ENCODE measurements at regions of chr7 and their contacts with region 1.

Region 1: GRCh38 chr7:103524042-103524907 is 78.3 kb upstream of the SLC26A5 start:
- DNase-seq: no peak
- ATAC-seq: peak in 3 of 8 donors; percentile 33 to 74 (median 47)
- H3K4me3 ChIP-seq: peak overlapping the region in 1 of 10 donors; percentile 8
- H3K27ac ChIP-seq: no peak overlapping the region
- H3K4me1 ChIP-seq: no peaks in the 10 kb centered on the region
- H3K27me3 ChIP-seq: peaks cover 0 to 3% (median 0%) of the 10 kb centered on the region in 7 donors
- CTCF ChIP-seq: peak in 7 of 9 donors; percentile 23 to 61 (median 47)

Region 2: GRCh38 chr7:102942181-102942866 is 582.0 kb before region 1 on chr7:
- intact Hi-C with region 1: no loop called
- DNase-seq: no peak
- ATAC-seq: peak in 2 of 8 donors; percentile 4 to 53
- H3K4me3 ChIP-seq: no peak overlapping the region
- H3K27ac ChIP-seq: peak overlapping the region in 3 of 10 donors; percentile 2 to 32 (median 21)
- H3K4me1 ChIP-seq: peaks cover 3 to 46% (median 23%) of the 10 kb centered on the region in 9 donors
- H3K27me3 ChIP-seq: no peaks in the 10 kb centered on the region
- CTCF ChIP-seq: no peak

Region 3: GRCh38 chr7:103487433-103487832 is 36.8 kb before region 1 on chr7:
- intact Hi-C with region 1: no loop called
- DNase-seq: no peak
- ATAC-seq: no peak
- H3K4me3 ChIP-seq: no peak overlapping the region
- H3K27ac ChIP-seq: no peak overlapping the region
- H3K4me1 ChIP-seq: no peaks in the 10 kb centered on the region
- H3K27me3 ChIP-seq: peaks cover 0 to 10% (median 0%) of the 10 kb centered on the region in 7 donors
- CTCF ChIP-seq: no peak

Region 4: DNA sequence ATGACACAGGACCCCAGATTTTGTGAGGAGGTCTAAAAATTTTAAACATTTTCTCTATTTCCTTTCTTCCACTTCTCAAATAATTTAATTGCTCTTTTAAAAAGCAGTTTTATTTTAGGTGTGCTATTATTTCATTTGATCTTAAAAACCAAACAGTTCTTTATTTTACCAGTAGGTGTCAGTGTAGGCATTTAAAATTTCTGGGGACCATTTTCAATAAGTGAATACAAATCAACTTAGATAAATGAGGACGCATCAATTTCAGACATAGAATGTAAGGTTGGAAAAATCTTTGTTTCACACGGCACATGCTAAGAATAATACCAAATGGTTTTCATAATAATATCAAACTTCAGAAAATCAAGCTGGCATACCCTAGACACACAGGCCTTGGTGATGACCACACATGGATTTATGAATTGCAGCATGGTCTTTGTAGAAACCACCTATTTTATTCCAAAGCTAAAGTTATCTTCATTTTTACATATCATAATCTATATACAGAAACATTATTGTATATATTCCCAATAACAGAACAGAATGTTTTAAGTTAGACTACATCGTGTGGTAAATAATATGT is 49.3 kb after region 1 on chr7:
- intact Hi-C with region 1: loop called in 1 of 10 experiments (anchors 2 kb)
- DNase-seq: no peak
- ATAC-seq: no peak
- H3K4me3 ChIP-seq: no peak overlapping the region
- H3K27ac ChIP-seq: no peak overlapping the region
- H3K4me1 ChIP-seq: no peaks in the 10 kb centered on the region
- H3K27me3 ChIP-seq: no peaks in the 10 kb centered on the region
- CTCF ChIP-seq: peak; percentile 32 to 77 (median 67)

Region 5: DNA sequence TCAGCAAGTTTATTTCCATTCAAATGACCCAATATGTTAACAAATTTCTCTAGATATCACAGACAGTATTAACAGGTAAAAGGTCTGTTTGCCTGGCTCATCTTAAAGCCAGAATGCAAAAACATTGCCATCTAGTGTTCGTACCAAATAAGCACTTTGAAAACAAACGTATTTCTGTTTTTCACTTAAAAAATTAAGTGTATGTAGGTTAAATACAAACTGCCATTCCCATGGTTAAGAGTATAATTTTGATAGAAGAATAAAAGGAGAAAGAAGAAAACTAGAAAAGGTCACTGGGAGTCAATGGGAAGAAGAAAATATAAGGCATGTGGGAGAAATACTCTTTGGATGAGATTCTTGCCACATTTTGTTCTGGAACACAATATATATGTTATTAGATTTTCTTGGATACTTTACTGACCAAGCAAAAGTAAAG is 632.6 kb after region 1 on chr7:
- intact Hi-C with region 1: loop called in 6 of 10 experiments (anchors 5 to 10 kb)
- DNase-seq: no peak
- ATAC-seq: no peak
- H3K4me3 ChIP-seq: no peak overlapping the region
- H3K27ac ChIP-seq: no peak overlapping the region
- H3K4me1 ChIP-seq: peaks cover 0 to 1% (median 0%) of the 10 kb centered on the region in 9 donors
- H3K27me3 ChIP-seq: no peaks in the 10 kb centered on the region
- CTCF ChIP-seq: peak; percentile 17 to 67 (median 53)

Measured in heart right ventricle (tissue), 16 donors.